IMR-90 (cell line): ENCODE measurements at regions of chr6 and their contacts with region 1.

Region 1: GRCh38 chr6:90739340-90739739 is 152.5 kb upstream of the MAP3K7 start:
- DNase-seq: no peak
- ATAC-seq: no peak
- H3K4me3 ChIP-seq: no peak overlapping the region
- H3K27ac ChIP-seq: no peak overlapping the region
- H3K4me1 ChIP-seq: no peaks in the 10 kb centered on the region
- H3K27me3 ChIP-seq: no peaks in the 10 kb centered on the region
- CTCF ChIP-seq: no peak
- POLR2A ChIP-seq: no peak
- RAD21 ChIP-seq: no peak

Region 2: GRCh38 chr6:90753820-90754643 is 14.7 kb after region 1 on chr6:
- CTCF ChIA-PET with region 1: no interaction called
- POLR2A ChIA-PET with region 1: no interaction called
- dilution Hi-C with region 1: no loop called
- in situ Hi-C with region 1: no loop called
- intact Hi-C with region 1: no loop called
- DNase-seq: no peak
- ATAC-seq: no peak
- H3K4me3 ChIP-seq: no peak overlapping the region
- H3K27ac ChIP-seq: no peak overlapping the region
- H3K4me1 ChIP-seq: no peaks in the 10 kb centered on the region
- H3K27me3 ChIP-seq: no peaks in the 10 kb centered on the region
- CTCF ChIP-seq: no peak
- POLR2A ChIP-seq: no peak
- RAD21 ChIP-seq: no peak

Region 3: DNA sequence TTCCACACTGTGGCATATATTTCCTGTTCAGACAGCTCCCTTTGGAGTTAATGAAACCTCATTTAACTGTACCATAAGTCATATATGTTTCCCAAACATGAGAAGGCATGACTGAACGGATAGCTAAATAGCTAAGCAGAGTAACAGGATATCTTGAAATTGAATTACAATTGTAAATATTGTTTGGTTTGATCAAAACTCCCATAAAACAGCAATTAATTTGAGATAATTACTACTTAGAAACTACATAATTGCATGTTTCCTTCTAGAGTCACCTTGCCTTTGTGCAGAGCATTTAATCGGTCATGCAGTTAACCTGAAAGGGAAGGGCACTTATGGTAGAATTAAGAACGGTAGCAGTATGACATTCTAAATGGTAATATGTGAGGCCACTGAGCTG is 26.6 kb after region 1 on chr6:
- CTCF ChIA-PET with region 1: no interaction called
- POLR2A ChIA-PET with region 1: interaction called, 22 read pairs
- dilution Hi-C with region 1: no loop called
- in situ Hi-C with region 1: no loop called
- intact Hi-C with region 1: no loop called
- DNase-seq: no peak
- ATAC-seq: no peak
- H3K4me3 ChIP-seq: no peak overlapping the region
- H3K27ac ChIP-seq: no peak overlapping the region
- H3K4me1 ChIP-seq: no peaks in the 10 kb centered on the region
- H3K27me3 ChIP-seq: no peaks in the 10 kb centered on the region
- CTCF ChIP-seq: no peak
- POLR2A ChIP-seq: no peak
- RAD21 ChIP-seq: no peak